GM10248 (cell line): ENCODE measurements at regions of chr9 and their contacts with region 1.

Region 1: DNA sequence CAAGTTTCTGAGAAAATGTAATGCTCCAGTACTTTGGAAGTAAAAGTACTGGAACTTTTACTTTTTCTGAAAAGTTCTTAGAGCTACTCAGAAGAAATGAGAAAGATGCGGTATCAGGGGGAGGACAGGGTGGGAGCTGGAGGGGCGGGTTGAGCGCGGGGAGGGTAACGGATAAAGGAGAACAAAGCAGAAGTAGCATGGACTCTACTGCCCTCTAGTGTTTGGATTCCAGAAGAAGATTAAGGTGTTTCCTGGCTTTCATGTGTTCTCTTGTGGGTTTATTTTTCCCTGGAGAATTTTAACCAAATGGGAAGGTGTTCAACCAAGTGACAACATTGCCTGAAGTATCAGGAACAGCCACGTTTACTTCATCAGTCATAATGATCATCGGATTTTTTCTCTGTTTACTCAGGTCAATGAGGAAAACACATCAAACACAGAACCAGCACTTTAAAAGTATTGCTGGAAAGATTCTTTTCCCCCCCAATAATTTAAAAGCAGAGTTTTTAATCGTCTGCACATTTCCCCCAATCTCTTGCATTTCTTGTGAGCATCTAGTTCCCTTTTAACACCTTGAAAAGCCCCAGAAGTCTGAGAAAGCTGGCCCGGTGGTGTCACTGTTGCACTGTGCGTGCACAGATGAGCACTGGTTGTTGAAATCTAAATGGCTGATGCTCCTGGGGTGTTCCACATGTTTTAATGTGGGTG is 190.6 kb downstream of the MPDZ start:
- DNase-seq: peak; percentile 70
- CTCF ChIP-seq: peak; percentile 53

Region 2: DNA sequence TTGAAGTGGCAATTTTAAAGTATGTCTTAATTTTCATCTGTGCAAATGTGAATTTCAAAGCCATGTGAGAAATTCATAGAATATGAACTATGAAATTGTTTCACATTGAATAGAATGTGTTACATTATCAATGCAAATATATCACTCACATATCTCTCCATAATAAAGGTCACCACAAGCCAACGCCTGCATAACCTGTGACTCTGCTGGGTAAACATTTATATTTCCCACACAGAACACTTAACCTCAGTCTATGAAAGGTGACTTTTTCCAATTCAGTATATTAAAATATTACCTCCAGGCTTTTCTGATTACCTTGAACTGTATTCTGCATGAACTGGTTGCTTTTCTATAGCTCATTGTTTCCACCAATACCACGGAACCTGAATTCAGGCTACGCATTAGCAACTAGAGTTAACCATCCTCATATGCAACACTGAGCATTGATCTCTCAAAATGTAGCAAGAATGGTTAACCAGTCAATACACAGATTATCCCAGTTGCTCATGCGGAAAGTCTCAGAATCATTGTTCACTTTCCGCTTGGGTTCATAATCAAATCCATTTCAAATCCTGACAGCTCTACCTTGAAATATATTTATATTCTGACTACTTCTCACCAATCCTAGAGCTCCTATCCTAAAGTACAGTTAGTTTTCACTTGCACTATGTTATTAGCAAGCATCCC is 522.3 kb before region 1 on chr9:
- CTCF ChIA-PET with region 1: no interaction called
- POLR2A ChIA-PET with region 1: no interaction called
- DNase-seq: no peak
- CTCF ChIP-seq: no peak

Region 3: GRCh38 chr9:13033959-13034693 is 54.7 kb before region 1 on chr9:
- CTCF ChIA-PET with region 1: interaction called, 32 read pairs
- POLR2A ChIA-PET with region 1: no interaction called
- DNase-seq: peak; percentile 53
- CTCF ChIP-seq: peak; percentile 67

Region 4: GRCh38 chr9:13078164-13078563 is 10.7 kb before region 1 on chr9:
- CTCF ChIA-PET with region 1: interaction called, 18 read pairs
- POLR2A ChIA-PET with region 1: no interaction called
- DNase-seq: no peak
- CTCF ChIP-seq: no peak

Region 5: GRCh38 chr9:13100914-13101572 is 12.2 kb after region 1 on chr9:
- CTCF ChIA-PET with region 1: interaction called, 10 read pairs
- POLR2A ChIA-PET with region 1: no interaction called
- DNase-seq: no peak
- CTCF ChIP-seq: no peak